Mammary epithelial cell (primary cell): ENCODE measurements at regions of chr2 and their contacts with region 1.

Region 1: DNA sequence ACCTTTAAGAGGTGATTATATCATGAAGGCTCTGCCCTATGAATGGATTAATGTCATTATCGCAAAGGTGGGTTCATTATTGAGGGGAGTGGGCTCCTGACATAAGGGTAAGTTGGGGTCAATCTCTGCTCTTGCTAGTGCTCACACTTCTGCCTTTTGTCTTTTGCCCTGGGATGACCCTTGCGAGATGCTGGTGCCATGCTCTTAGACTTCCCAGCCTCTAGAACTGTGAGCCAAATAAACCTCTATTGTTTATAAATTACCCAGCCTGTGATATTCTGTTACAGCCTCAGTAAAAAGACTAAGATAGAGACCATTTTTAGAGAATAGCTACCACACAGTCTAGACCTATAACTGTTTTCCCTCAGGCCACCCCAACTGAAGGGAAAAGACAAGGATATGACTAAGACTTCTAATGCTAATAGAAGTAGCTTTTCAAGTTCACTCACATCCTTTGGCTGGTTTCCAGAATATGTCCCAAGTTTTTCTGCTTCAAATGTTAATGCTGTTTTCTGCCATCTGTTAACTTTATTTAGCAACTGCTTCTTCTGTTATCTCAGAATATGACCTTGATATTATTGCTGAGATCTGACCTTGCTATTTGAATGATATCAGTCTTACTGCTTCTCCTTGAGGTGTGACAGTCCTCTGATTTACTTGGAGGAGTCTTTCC is 65.1 kb upstream of the STAM2 start:
- DNase-seq: peak; percentile 90
- H3K4me3 ChIP-seq: no peak overlapping the region
- H3K27ac ChIP-seq: peak overlapping the region; percentile 54
- H3K4me1 ChIP-seq: peaks cover 35% of the 10 kb centered on the region
- H3K27me3 ChIP-seq: no peaks in the 10 kb centered on the region
- CTCF ChIP-seq: no peak

Region 2: GRCh38 chr2:152115952-152116351 is 124.7 kb before region 1 on chr2:
- CTCF ChIA-PET with region 1: no interaction called
- dilution Hi-C with region 1: no loop called
- in situ Hi-C with region 1: no loop called
- intact Hi-C with region 1: no loop called
- DNase-seq: no peak
- H3K4me3 ChIP-seq: no peak overlapping the region
- H3K27ac ChIP-seq: no peak overlapping the region
- H3K4me1 ChIP-seq: no peaks in the 10 kb centered on the region
- H3K27me3 ChIP-seq: no peaks in the 10 kb centered on the region
- CTCF ChIP-seq: peak in 1 of 2 donors; percentile 33

Region 3: GRCh38 chr2:152200562-152201465 is 39.9 kb before region 1 on chr2:
- CTCF ChIA-PET with region 1: interaction called, 3 read pairs
- dilution Hi-C with region 1: no loop called
- in situ Hi-C with region 1: no loop called
- intact Hi-C with region 1: loop called (anchors 5 kb)
- DNase-seq: peak; percentile 100
- H3K4me3 ChIP-seq: peak overlapping the region in 1 of 3 experiments; percentile 4
- H3K27ac ChIP-seq: peak overlapping the region; percentile 87
- H3K4me1 ChIP-seq: peaks cover 22% of the 10 kb centered on the region
- H3K27me3 ChIP-seq: no peaks in the 10 kb centered on the region
- CTCF ChIP-seq: no peak